Left lung (tissue), 14 donors: ENCODE measurements at regions of chr20 and their contacts with region 1.

Region 1: GRCh38 chr20:19205977-19206396 is 6.5 kb upstream of the SLC24A3 start:
- DNase-seq: peak; percentile 49 to 96 (median 59)
- ATAC-seq: peak; percentile 90
- H3K4me3 ChIP-seq: no peak overlapping the region
- H3K27ac ChIP-seq: no peak overlapping the region
- H3K4me1 ChIP-seq: peaks cover 0 to 1% of the 10 kb centered on the region in 2 donors
- H3K27me3 ChIP-seq: peaks cover 0 to 4% of the 10 kb centered on the region in 2 donors
- CTCF ChIP-seq: peak; percentile 78 to 92

Region 2: DNA sequence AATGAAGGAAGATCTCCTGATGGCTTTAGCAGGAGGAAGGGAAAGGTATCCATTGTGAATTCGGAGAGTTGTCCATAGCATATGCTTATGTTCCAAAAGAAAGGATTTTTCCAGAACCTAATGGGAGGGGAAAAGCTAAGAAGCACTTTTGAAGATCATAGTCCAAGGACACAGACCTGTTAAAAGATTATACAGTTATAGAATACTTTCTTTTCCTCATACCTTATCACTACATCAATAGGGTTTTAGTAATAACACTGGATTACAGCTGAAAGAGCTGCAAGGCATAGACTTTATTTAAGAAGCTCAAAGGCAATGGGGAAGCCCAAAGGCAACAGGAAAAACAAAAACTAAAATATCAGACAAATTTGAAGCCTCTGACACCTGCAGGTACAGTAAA is 33.4 kb before region 1 on chr20:
- intact Hi-C with region 1: no loop called
- DNase-seq: no peak
- ATAC-seq: no peak
- H3K4me3 ChIP-seq: no peak overlapping the region
- H3K27ac ChIP-seq: no peak overlapping the region
- H3K4me1 ChIP-seq: no peaks in the 10 kb centered on the region
- H3K27me3 ChIP-seq: no peaks in the 10 kb centered on the region
- CTCF ChIP-seq: no peak

Region 3: GRCh38 chr20:19583532-19584175 is 377.7 kb after region 1 on chr20:
- intact Hi-C with region 1: loop called in 1 of 2 experiments (anchors 5 kb)
- DNase-seq: peak; percentile 43 to 84 (median 62)
- ATAC-seq: peak; percentile 99
- H3K4me3 ChIP-seq: no peak overlapping the region
- H3K27ac ChIP-seq: no peak overlapping the region
- H3K4me1 ChIP-seq: no peaks in the 10 kb centered on the region
- H3K27me3 ChIP-seq: no peaks in the 10 kb centered on the region
- CTCF ChIP-seq: peak; percentile 73 to 87

Region 4: DNA sequence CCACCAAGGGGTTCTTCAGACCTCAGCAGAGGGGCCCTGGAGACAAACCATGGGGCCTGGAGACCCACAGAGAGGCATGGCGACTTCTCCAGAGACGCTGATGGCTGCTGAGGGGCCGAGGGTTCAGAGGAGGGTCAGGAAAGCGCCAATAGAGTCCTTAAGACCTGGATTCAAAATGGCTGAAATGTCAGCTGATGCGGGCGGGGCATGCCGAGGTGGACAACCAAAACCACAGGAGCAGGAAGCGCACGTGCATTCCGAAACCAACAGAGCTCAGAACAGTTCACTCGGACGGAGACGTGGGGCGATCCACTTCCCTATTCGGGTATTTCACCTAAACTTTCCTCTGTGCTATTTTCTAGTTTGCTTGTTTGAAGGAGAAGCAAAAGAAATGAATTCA is 452.1 kb after region 1 on chr20:
- intact Hi-C with region 1: loop called in 1 of 2 experiments (anchors 10 kb)
- DNase-seq: no peak
- ATAC-seq: no peak
- H3K4me3 ChIP-seq: no peak overlapping the region
- H3K27ac ChIP-seq: no peak overlapping the region
- H3K4me1 ChIP-seq: no peaks in the 10 kb centered on the region
- H3K27me3 ChIP-seq: peaks cover 0 to 7% of the 10 kb centered on the region in 2 donors
- CTCF ChIP-seq: no peak